Mammary epithelial cell (primary cell): ENCODE measurements at regions of chr2 and their contacts with region 1.

Region 1: DNA sequence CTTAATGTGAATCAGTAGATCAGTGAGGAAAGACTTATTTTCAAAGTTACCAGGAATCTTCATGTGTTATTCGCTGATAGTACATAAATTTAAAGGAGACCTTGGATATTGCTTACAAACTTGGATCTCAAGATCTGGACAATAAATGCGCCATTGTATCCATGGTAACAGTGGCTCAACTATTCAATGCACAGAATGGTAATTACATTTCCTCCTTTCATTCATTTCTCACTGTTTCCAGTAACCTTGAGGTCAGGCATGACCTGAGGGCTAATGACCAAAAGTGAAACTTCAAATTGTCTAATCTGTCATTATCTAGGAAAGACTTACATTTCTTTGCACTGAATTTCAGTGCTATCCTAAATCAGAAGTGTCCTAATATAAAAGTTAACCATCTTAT is 8.1 kb downstream of the LRP2 start:
- DNase-seq: no peak
- H3K4me3 ChIP-seq: no peak overlapping the region
- H3K27ac ChIP-seq: no peak overlapping the region
- H3K4me1 ChIP-seq: no peaks in the 10 kb centered on the region
- H3K27me3 ChIP-seq: peaks cover 5% of the 10 kb centered on the region
- CTCF ChIP-seq: no peak

Region 2: GRCh38 chr2:169386722-169387121 is 32.5 kb after region 1 on chr2:
- CTCF ChIA-PET with region 1: no interaction called
- dilution Hi-C with region 1: loop called (anchors 5 kb)
- in situ Hi-C with region 1: no loop called
- intact Hi-C with region 1: no loop called
- DNase-seq: no peak
- H3K4me3 ChIP-seq: no peak overlapping the region
- H3K27ac ChIP-seq: no peak overlapping the region
- H3K4me1 ChIP-seq: no peaks in the 10 kb centered on the region
- H3K27me3 ChIP-seq: peaks cover 13% of the 10 kb centered on the region
- CTCF ChIP-seq: no peak